AG04449 (cell line): ENCODE measurements at regions of chr4 and their contacts with region 1.

Region 1: DNA sequence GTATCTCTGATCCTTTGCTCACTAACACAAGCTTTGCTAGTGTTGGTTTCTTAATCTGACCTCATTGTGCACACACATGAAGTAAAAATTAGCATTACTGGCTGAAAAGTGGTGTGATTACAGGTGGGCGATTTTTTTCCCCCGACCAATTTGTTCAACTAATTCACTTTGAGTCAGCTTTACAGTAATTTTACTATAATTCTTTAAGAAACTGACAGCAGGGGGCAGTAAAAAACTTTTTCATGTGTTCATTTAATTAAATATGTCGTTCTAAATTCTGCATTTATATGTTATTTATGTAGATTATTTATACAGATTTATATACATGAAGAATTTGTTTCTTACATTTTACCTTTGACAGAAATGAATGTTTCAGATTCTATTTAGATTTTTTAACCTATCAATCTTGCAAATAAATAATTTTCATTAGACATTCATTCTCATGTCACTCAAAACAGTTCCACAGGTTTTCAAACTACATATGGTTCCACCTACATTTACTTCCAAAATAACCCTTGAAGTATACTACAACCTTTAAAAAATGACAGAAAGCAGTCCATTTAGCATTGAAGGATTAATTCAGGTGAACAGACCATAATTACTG is 17.5 kb downstream of the PALLD start:
- DNase-seq: no peak
- H3K4me3 ChIP-seq: no peak overlapping the region
- CTCF ChIP-seq: no peak

Region 2: DNA sequence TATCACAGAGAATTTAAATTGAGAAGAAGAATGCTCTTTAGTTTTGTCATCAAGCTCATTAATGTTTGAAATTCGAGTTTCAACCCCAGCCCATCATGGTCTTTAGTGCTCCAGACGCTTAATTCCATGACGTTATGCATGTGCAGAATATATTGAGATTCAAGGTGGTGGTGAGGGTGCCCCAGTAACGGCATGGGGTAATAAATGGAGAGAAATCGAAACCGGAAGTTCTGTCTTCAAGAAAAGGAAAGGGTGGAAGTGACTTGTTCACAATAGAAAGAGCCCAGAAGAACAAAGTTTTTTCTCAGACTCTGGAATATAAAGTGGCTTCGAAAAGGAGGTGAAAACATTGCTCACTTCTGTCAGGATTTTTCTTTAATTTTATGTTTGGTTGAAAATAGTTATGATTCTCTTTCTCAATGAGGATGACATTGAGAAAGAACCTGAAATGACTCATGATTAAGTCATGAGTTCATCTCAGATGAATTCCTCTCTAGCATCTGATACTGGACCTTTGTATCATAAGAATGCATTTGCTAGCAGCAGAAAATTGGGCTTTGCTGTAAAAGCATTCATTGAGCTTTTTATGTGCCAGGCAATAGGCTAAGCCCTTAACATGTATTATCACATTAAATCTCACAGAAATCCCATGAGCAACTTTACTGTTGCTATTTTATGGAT is 33.3 kb before region 1 on chr4:
- CTCF ChIA-PET with region 1: interaction called, 16 read pairs
- POLR2A ChIA-PET with region 1: no interaction called
- DNase-seq: peak; percentile 50
- H3K4me3 ChIP-seq: peak overlapping the region; percentile 71
- CTCF ChIP-seq: no peak

Region 3: GRCh38 chr4:168486961-168487305 is 27.4 kb before region 1 on chr4:
- CTCF ChIA-PET with region 1: interaction called, 10 read pairs
- POLR2A ChIA-PET with region 1: no interaction called
- DNase-seq: no peak
- H3K4me3 ChIP-seq: no peak overlapping the region
- CTCF ChIP-seq: no peak

Region 4: GRCh38 chr4:168503652-168504362 is 10.5 kb before region 1 on chr4:
- CTCF ChIA-PET with region 1: interaction called, 41 read pairs
- POLR2A ChIA-PET with region 1: no interaction called
- DNase-seq: no peak
- H3K4me3 ChIP-seq: no peak overlapping the region
- CTCF ChIP-seq: no peak

Region 5: DNA sequence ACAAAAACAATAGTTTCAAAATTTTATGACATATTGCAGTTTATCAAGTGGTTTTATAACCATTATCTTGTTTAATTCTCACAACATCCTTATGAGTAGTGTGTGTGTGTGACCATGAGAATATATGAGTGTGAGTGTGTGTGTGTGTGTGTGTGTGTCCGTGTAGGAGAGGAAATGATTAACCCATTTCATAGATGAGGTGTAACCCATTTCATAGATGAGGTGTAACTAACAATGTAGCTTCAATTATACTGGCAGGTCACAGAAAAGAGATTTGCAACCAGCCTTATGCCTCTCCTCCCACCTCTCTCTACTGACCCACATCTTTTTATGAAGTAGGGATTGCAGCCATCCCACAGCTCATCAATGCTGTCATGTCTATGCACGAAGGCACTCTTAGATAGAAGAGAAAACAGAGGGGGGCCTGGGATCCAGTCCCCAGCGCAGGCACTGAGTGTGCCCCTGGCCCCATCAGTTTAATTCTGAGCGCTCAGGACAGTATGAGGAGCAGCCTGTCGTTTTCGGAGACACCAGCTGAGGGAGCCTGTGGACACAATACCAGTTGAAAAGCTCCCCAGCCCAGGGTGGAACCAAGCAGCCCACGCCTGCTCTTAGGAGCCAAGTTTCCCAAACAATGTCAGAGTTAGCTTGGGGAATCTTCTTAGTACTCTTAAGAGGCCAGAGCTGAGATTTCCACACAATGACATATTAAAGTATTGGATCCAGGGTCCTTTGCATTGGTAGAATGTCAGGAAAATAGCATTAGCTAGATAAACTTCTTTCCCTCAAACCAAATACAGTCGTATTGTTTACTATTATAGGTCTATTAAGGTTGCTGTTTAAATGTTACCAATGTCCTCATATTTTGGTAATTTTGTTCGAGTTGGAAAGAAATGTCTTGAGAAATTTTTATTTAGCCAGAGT is 71.1 kb after region 1 on chr4:
- CTCF ChIA-PET with region 1: interaction called, 13 read pairs
- POLR2A ChIA-PET with region 1: no interaction called
- DNase-seq: no peak
- H3K4me3 ChIP-seq: no peak overlapping the region
- CTCF ChIP-seq: peak; percentile 79

Region 6: GRCh38 chr4:168621806-168622589 is 107.6 kb after region 1 on chr4:
- CTCF ChIA-PET with region 1: no interaction called
- POLR2A ChIA-PET with region 1: no interaction called
- DNase-seq: peak; percentile 73
- H3K4me3 ChIP-seq: no peak overlapping the region
- CTCF ChIP-seq: no peak

Region 7: GRCh38 chr4:168710353-168710946 is 196.1 kb after region 1 on chr4:
- CTCF ChIA-PET with region 1: interaction called, 11 read pairs
- POLR2A ChIA-PET with region 1: no interaction called
- DNase-seq: no peak
- H3K4me3 ChIP-seq: no peak overlapping the region
- CTCF ChIP-seq: peak; percentile 43